Activated CD4-positive, alpha-beta memory T cell treated with anti-CD3 and anti-CD28 coated beads, Interleukin-2, amount 10 ng/mL, durations not matched to agents 7 days and 5 days (primary cell): ENCODE measurements at regions of chr9 and their contacts with region 1.

Region 1: GRCh38 chr9:33737811-33738606 is 57.4 kb upstream of the PRSS3 start:
- DNase-seq: peak; percentile 30
- H3K4me3 Mint-ChIP-seq: no peak overlapping the region
- H3K27ac Mint-ChIP-seq: no peak overlapping the region
- H3K4me1 Mint-ChIP-seq: no peaks in the 10 kb centered on the region
- H3K27me3 Mint-ChIP-seq: peaks cover 50% of the 10 kb centered on the region

Region 2: GRCh38 chr9:33721674-33722358 is 16.2 kb before region 1 on chr9:
- CTCF ChIA-PET with region 1: interaction called, 12 read pairs
- POLR2A ChIA-PET with region 1: no interaction called
- DNase-seq: peak; percentile 88
- H3K4me3 Mint-ChIP-seq: no peak overlapping the region
- H3K27ac Mint-ChIP-seq: no peak overlapping the region
- H3K4me1 Mint-ChIP-seq: peaks cover 1% of the 10 kb centered on the region
- H3K27me3 Mint-ChIP-seq: peaks cover 31% of the 10 kb centered on the region

Region 3: DNA sequence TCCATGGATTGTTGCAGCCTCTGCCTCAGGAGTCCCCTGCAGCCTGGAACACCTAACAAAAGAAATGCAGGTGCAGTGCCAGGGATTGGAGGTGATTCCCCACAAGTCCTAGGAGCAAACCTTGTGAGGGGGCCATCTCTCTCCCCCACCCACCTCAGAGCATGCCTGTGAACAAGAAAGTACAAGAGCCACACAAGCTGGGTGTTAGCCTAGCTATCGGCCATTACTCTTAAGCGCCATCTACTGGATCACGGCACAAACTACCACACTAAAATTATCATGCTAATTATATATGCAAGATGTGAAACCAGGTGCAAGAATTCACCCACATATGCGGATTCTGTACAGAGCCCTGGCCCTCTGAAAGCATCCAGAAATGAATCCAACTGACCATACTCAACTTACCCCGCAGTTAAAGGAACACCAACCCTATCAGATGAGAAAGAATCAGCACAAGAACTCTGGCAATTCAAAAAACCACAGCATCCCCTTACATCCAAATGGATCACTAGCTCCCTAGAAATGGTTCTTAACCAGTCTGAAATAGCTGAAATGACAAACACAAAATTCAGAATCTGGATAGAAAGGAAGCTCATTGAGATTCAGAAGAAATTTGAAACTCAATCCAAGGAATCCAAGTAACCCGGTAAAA is 40.8 kb after region 1 on chr9:
- CTCF ChIA-PET with region 1: interaction called, 50 read pairs
- POLR2A ChIA-PET with region 1: interaction called, 3 read pairs
- DNase-seq: peak; percentile 54
- H3K4me3 Mint-ChIP-seq: no peak overlapping the region
- H3K27ac Mint-ChIP-seq: no peak overlapping the region
- H3K4me1 Mint-ChIP-seq: no peaks in the 10 kb centered on the region
- H3K27me3 Mint-ChIP-seq: peaks cover 35% of the 10 kb centered on the region